ENCODE measurements at regions of chr1 and their contacts with region 1.

Region 1: DNA sequence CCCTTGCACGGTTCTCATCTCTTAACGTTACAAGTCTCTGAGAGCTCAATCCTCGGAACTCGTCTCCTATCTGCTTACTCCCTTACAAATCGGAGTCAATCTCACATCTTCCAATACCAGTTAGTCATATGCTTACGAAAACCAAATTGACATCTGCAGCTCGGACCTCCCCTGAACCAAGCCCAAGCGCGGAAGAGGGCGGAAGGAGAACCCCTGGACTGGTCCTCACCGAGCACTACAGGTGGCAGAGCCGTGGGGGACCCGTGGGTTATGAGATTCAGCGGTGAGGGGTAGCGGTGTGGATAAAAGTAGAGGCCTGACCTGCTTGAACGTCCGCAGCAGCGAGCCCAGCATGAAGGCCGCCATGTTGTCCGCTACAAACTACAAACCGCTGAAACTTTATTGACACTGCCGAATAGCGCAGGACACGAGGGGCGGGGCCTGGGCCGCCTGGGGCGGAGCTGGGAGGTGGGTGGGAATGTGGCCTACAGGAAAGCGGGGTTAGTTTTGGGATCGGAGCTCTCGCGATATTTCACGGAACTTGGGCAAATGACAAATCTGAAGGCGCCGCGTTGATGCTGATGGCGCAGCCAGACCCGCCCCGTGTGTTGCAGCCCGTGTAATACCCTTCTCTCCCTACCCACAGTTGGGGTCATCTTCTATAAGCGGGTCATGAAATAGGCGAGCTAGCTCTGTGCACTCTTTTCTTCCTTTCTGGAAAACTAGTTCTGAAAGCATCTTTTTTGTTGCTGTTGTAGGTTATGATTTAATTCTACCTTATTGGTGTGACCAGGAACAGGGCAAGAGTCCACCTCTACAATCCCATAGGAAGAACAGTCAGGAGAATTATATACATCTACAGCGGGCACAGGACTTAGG is at the start of gene MRPS14:
- H3K4me3 ChIP-seq: peak within 1 kb of the TSS; percentile 95
- H3K27ac ChIP-seq: peak within 1 kb of the TSS; percentile 32
- H3K4me1 ChIP-seq: no peaks in the 10 kb centered on the region; the same call in 1 of the 2 replicates
- CTCF ChIP-seq: no peak

Region 2: GRCh38 chr1:174982971-174983689 is 40.2 kb before region 1 on chr1:
- CTCF ChIA-PET with region 1: no interaction called
- POLR2A ChIA-PET with region 1: no interaction called
- H3K4me3 ChIP-seq: no peak overlapping the region
- H3K27ac ChIP-seq: no peak overlapping the region
- H3K4me1 ChIP-seq: no peaks in the 10 kb centered on the region
- CTCF ChIP-seq: no peak

Region 3: GRCh38 chr1:174999216-174999925 is 23.9 kb before region 1 on chr1:
- CTCF ChIA-PET with region 1: no interaction called
- POLR2A ChIA-PET with region 1: interaction called, 58 read pairs
- H3K4me3 ChIP-seq: peak overlapping the region; percentile 88
- H3K27ac ChIP-seq: peak overlapping the region; percentile 92
- H3K4me1 ChIP-seq: no peaks in the 10 kb centered on the region
- CTCF ChIP-seq: no peak

Region 4: GRCh38 chr1:175072099-175072951 is 49.0 kb after region 1 on chr1:
- CTCF ChIA-PET with region 1: no interaction called
- POLR2A ChIA-PET with region 1: no interaction called
- H3K4me3 ChIP-seq: no peak overlapping the region
- H3K27ac ChIP-seq: no peak overlapping the region; the same call in 1 of the 2 replicates
- H3K4me1 ChIP-seq: no peaks in the 10 kb centered on the region
- CTCF ChIP-seq: no peak

Region 5: GRCh38 chr1:175089136-175089718 is 65.9 kb after region 1 on chr1:
- CTCF ChIA-PET with region 1: no interaction called
- POLR2A ChIA-PET with region 1: no interaction called
- H3K4me3 ChIP-seq: no peak overlapping the region
- H3K27ac ChIP-seq: no peak overlapping the region
- H3K4me1 ChIP-seq: no peaks in the 10 kb centered on the region
- CTCF ChIP-seq: no peak

Region 6: DNA sequence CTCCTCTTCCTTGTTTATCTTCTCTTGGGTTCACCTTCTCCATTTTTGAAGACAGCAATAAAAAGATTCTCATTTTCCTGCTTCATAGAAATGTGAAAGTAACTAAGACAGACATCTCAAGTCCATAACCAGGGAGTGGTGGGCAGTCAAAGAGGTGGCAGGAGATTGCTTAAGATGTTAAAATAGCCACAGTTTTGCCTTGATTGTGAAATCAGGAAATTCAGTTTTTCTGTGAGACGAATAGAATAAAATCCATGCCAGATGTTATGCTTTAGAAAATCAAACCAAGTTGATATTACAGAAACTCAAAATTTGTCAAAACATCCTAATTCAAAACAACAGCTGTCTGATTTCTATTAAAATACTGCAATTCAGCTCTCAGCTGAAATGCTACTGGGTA is 101.6 kb after region 1 on chr1:
- CTCF ChIA-PET with region 1: interaction called, 30 read pairs
- POLR2A ChIA-PET with region 1: interaction called, 11 read pairs
- H3K4me3 ChIP-seq: no peak overlapping the region
- H3K27ac ChIP-seq: no peak overlapping the region
- H3K4me1 ChIP-seq: no peaks in the 10 kb centered on the region
- CTCF ChIP-seq: no peak

Region 7: DNA sequence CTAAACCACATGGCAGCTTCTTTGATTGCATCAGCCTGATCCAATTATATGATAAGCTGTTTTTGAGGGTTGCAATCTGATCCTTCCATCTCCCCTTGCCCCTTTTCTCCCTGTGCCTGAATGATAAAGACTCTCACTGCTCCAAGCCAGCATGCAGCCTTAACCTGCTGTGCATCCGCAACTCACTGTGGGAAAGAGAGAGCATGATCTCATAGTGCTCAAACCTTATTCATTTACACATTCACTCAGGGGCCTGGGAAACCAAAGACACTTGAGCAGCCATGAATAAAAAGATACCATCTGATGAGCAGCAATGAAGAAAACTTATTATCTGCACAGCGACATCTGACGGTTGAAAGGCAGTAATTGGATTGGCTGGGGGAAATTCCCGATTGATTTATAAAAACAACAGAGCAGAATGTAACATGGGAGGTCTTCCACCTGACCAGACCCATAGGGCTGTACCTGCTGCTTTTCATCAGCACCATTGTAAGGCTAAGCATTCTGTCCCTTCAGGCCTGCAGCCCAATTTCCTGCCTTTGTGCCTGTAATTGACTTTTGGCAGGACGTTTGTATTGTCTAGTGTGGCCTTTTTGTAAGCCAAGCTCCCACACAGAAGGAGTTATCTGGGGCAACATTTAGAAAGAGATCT is 106.8 kb after region 1 on chr1:
- CTCF ChIA-PET with region 1: interaction called, 30 read pairs
- POLR2A ChIA-PET with region 1: interaction called, 11 read pairs
- H3K4me3 ChIP-seq: no peak overlapping the region
- H3K27ac ChIP-seq: no peak overlapping the region
- H3K4me1 ChIP-seq: no peaks in the 10 kb centered on the region
- CTCF ChIP-seq: no peak

Region 8: DNA sequence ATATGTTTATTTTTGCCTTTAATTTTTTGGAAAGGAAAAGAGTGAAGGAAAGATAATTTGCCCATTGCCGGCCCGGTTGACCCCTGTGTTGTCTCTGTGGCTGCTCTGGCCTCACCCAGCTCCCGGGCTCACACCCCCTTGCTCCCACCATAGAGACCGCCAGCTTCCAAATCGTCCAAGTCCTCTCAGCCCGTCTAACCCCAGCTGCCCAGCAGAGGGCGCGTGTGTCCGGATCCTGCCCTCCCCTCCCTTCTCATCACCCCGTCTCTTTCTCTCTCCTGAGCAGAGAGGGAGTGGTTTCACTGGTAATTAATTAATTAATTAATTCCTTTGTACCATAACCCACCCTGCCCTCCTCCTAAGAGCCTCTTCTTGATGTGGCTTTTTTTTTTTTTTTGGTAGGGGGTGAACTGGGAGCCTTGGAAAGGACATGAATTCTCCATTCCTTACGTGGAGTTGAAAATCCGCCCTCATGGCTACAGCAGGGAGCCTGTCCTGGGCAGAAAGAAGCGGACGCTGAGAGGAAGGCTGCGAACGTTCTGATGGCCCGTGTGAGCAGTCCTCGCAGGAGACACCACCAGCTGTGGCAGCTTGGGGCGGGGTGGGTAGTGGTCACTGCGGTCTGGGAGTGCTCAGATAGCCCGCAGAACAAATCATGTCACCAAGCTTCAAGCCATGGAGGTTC is 123.4 kb after region 1 on chr1:
- CTCF ChIA-PET with region 1: interaction called, 37 read pairs
- POLR2A ChIA-PET with region 1: interaction called, 5 read pairs
- H3K4me3 ChIP-seq: no peak overlapping the region
- H3K27ac ChIP-seq: no peak overlapping the region
- H3K4me1 ChIP-seq: no peaks in the 10 kb centered on the region
- CTCF ChIP-seq: peak; percentile 85

Region 9: DNA sequence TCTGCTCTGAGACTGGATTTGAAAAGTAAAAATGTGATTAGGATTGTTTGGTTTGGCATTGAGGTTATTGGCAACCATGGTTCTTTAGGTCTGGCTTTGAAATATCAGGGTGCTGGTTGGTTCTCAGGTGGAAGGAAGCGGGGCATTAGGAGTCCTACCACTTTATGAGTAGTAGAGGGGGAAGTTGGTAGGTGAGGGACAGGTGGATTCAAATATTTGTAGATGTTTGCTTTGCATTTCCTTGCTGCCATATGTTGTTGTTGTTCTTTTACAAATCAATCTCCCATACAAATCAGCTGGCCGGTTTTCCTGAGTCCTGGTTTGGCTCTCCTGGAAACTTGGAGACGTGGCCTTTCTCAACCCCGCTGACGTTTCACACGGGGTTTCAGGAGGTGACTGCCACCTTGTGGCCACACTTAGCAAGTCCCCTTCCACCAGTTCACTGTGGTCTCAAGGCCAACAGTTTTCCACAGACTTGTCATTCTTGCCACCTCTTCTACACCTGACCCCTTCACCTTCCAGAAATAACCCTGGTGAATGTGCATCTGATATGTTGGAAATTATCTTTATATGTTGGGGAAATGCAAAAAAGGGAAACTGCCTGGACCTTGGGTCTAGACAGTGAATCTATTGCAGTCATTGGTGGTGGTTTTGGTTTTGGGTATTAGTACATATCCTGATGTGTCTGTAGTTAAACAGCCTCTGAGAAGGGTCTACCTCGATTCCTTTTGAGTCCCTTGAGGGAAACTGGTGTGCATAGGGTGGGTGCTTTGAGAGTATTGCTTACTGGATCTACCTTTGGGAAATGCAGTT is 296.3 kb after region 1 on chr1:
- CTCF ChIA-PET with region 1: interaction called, 12 read pairs
- POLR2A ChIA-PET with region 1: no interaction called
- H3K4me3 ChIP-seq: no peak overlapping the region
- H3K27ac ChIP-seq: no peak overlapping the region
- H3K4me1 ChIP-seq: no peaks in the 10 kb centered on the region
- CTCF ChIP-seq: peak; percentile 55; the same call in 1 of the 2 replicates

Measured in HEK293 (cell line).